HepG2 (cell line): ENCODE measurements at regions of chr13 and their contacts with region 1.

Region 1: GRCh38 chr13:26985285-26985878 is 186.2 kb downstream of the USP12 start:
- DNase-seq: peak; percentile 74
- ATAC-seq: peak; percentile 36
- H3K4me3 ChIP-seq: no peak overlapping the region
- H3K27ac ChIP-seq: no peak overlapping the region
- H3K4me1 ChIP-seq: peaks cover 93% of the 10 kb centered on the region
- H3K27me3 ChIP-seq: no peaks in the 10 kb centered on the region
- CTCF ChIP-seq: peak; percentile 91
- EP300 ChIP-seq: no peak
- POLR2A ChIP-seq: no peak
- RAD21 ChIP-seq: peak; percentile 87

Region 2: DNA sequence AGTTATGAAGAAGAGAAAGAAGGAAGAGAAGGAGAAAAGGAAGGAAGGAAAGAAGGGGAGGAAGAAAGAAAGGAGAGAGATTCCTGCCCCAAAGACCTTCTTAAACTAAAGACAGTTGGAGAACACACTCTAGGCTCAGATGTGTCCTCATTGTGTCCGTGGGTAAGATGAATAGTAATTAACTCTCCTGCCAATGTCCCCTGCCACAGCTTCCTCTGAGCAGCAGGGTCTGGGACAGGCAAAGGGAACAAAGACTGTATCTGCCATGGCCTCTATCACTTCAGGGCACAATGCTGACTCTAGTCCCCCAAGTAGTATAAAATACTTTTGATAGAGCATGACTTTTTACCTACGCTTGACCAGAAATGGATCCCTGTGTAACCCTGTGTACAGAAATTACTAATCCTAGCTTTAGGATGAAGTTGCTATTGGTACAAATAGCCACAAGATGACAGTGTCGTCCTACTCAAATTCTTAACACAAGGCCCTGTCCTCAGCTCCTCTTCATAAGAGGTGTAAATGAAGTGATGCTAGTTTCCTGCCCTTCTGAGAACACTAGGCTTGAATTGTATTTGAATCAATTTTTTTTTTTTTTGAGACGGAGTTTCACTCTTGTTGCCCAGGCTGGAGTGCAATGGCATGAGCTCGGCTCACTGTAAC is 38.6 kb before region 1 on chr13:
- CTCF ChIA-PET with region 1: no interaction called
- POLR2A ChIA-PET with region 1: interaction called, 9 read pairs
- in situ Hi-C with region 1: no loop called
- intact Hi-C with region 1: loop called (anchors 1 kb)
- DNase-seq: peak; percentile 64
- ATAC-seq: peak; percentile 80
- H3K4me3 ChIP-seq: no peak overlapping the region
- H3K27ac ChIP-seq: no peak overlapping the region
- H3K4me1 ChIP-seq: peaks cover 37% of the 10 kb centered on the region
- H3K27me3 ChIP-seq: no peaks in the 10 kb centered on the region
- CTCF ChIP-seq: peak; percentile 90
- EP300 ChIP-seq: no peak
- POLR2A ChIP-seq: no peak
- RAD21 ChIP-seq: peak; percentile 87

Region 3: DNA sequence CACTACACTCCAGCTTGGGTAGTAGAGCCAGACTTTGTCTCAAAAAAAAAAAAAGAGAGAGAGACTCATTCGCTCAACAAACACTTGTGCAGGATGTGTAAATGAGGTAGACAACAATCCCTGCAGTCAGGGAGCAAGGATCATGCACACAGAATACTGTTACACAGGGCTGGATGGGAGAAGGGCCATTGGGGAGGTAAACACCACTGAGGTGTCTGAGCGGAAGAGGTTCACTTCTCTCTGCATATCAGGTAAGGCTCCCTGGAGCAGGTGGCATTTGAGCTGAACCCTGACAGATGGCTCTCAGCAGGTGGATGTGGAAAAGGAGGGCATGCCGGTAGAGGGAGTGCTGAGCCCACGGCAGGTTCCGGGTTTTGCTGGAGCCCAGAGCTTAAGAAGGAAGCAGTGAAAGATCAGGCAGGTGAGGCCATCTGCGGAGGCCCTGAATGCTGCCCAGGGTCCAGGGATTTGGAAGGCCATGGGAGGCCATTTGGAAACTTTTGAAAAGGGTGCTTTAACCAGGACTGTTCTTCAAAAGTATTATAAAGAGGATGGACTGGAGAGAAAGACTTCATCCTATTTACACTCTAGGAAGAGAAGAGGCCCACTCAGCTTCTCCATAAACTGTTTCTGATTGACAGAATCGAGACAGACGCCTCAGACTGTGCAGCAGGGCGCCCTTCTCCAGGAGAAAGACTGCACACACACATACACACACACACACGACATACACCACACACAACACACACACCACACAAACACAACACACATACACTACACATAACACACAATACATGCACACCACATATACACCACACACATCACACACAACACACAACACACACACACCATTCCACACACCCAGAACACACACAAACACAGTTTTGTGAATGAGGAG is 13.1 kb before region 1 on chr13:
- CTCF ChIA-PET with region 1: interaction called, 3 read pairs
- POLR2A ChIA-PET with region 1: interaction called, 18 read pairs
- in situ Hi-C with region 1: no loop called
- intact Hi-C with region 1: loop called (anchors 1 kb)
- DNase-seq: peak; percentile 74
- ATAC-seq: peak; percentile 60
- H3K4me3 ChIP-seq: peak overlapping the region in 1 of 3 experiments; percentile 16; a peak in 1 of 6 replicates
- H3K27ac ChIP-seq: peak overlapping the region; percentile 48
- H3K4me1 ChIP-seq: peaks cover 97% of the 10 kb centered on the region
- H3K27me3 ChIP-seq: no peaks in the 10 kb centered on the region
- CTCF ChIP-seq: peak; percentile 82
- EP300 ChIP-seq: no peak
- POLR2A ChIP-seq: no peak
- RAD21 ChIP-seq: peak; percentile 55

Region 4: DNA sequence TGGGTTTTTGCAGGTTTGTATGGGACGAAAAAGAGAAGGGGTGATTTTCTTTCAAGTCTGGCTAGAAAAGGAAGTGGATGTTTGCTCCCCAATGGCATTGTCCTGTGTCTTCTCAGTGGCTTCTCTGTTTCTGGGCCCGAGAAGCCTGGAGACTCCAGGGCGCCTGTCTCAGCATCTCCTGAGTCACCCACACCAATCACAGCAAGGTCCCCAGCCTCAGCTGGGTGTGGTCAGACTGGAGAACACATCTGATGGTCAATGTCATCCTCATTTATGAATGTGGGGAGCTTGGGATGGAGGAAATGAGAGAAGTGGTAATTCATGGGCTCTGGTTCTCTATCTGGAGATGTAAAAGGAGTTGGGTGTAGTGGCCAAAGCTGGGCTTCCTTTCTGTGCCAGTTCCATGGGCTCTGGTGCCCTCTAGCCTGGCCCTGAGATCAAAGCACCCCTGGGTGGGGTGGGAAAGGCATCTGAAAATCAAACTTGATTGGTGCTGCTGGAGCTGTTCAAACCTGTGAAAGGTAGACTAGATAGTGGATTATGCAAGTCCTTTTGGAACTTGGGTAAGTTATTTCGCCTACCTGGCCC is 298.6 kb after region 1 on chr13:
- CTCF ChIA-PET with region 1: interaction called, 3 read pairs
- POLR2A ChIA-PET with region 1: no interaction called
- in situ Hi-C with region 1: loop called (anchors 5 kb)
- intact Hi-C with region 1: loop called (anchors 2 kb)
- DNase-seq: no peak
- ATAC-seq: peak; percentile 58
- H3K4me3 ChIP-seq: no peak overlapping the region
- H3K27ac ChIP-seq: no peak overlapping the region
- H3K4me1 ChIP-seq: peaks cover 13% of the 10 kb centered on the region; the same call in 1 of the 2 replicates
- H3K27me3 ChIP-seq: no peaks in the 10 kb centered on the region; a peak in 1 of 5 replicates
- CTCF ChIP-seq: peak; percentile 57
- EP300 ChIP-seq: no peak
- POLR2A ChIP-seq: no peak
- RAD21 ChIP-seq: peak; percentile 17; the same call in 1 of the 2 replicates

Region 5: GRCh38 chr13:27977476-27978300 is 992.3 kb after region 1 on chr13:
- CTCF ChIA-PET with region 1: no interaction called
- POLR2A ChIA-PET with region 1: no interaction called
- in situ Hi-C with region 1: no loop called
- intact Hi-C with region 1: loop called (anchors 10 kb)
- DNase-seq: no peak
- ATAC-seq: peak; percentile 24; the same call in 2 of the 3 replicates
- H3K4me3 ChIP-seq: no peak overlapping the region
- H3K27ac ChIP-seq: no peak overlapping the region
- H3K4me1 ChIP-seq: peaks cover 13% of the 10 kb centered on the region
- H3K27me3 ChIP-seq: peaks cover 10 to 68% of the 10 kb centered on the region in 2 experiments
- CTCF ChIP-seq: no peak
- EP300 ChIP-seq: no peak
- POLR2A ChIP-seq: no peak
- RAD21 ChIP-seq: no peak